Activated B cell treated with CpG ODN at 0.5 μM for 24 hours (primary cell): ENCODE measurements at regions of chrX and their contacts with region 1.

Region 1: GRCh38 chrX:22664826-22665225 is 334.9 kb upstream of the DDX53 start:
- DNase-seq: no peak
- ATAC-seq: no peak
- H3K4me3 Mint-ChIP-seq: no peak overlapping the region
- H3K27ac Mint-ChIP-seq: no peak overlapping the region
- H3K4me1 Mint-ChIP-seq: no peaks in the 10 kb centered on the region
- H3K27me3 Mint-ChIP-seq: no peaks in the 10 kb centered on the region
- CTCF ChIP-seq: no peak

Region 2: GRCh38 chrX:22629105-22629725 is 35.6 kb before region 1 on chrX:
- CTCF ChIA-PET with region 1: no interaction called
- POLR2A ChIA-PET with region 1: no interaction called
- intact Hi-C with region 1: loop called (anchors 2 kb)
- DNase-seq: no peak
- ATAC-seq: no peak
- H3K4me3 Mint-ChIP-seq: no peak overlapping the region
- H3K27ac Mint-ChIP-seq: no peak overlapping the region
- H3K4me1 Mint-ChIP-seq: no peaks in the 10 kb centered on the region
- H3K27me3 Mint-ChIP-seq: peaks cover 1% of the 10 kb centered on the region
- CTCF ChIP-seq: no peak